ENCODE measurements at regions of chr7 and their contacts with region 1.

Region 1: DNA sequence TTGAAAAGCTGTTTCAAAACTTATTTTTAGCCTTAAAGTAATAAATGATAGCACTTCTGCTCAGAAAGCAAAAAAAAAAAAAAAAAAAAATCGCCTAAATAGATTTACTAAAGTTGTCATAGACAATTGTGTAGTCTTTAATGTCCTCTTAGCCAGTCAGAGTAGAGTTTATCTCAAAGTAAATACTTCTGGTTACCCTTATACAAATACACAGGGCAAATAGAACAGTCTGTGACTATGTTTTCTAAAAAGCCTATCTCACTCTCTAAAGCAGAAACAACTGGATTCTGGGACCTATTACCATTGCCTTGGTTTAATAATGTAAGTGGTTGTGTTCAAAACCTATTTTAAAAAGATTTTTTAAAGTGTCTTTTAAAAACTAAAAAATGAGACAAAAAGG is 156.2 kb upstream of the THSD7A start:
- DNase-seq: no peak
- ATAC-seq: no peak
- H3K4me3 ChIP-seq: no peak overlapping the region
- H3K27ac ChIP-seq: no peak overlapping the region
- H3K4me1 ChIP-seq: no peaks in the 10 kb centered on the region
- H3K27me3 ChIP-seq: no peaks in the 10 kb centered on the region
- CTCF ChIP-seq: no peak

Region 2: DNA sequence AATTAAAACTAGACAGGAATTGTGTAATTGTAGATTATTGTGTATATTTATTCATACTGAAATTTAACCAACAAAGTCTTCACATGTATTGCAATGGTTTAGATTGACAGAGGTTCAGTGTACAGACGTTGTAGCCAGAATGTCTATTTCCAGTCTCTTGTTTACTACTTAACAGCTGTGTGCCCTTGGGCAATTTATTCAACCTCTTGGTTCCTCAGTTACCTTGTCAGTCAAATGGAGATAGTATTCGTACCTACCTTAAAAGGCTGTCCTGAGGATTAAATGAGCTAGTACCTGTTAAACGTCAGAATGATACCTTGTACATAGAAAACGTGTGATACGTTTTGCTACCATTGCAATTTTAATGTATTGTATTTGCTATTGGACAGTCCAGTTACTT is 738.4 kb before region 1 on chr7:
- intact Hi-C with region 1: no loop called
- DNase-seq: no peak
- ATAC-seq: no peak
- H3K4me3 ChIP-seq: no peak overlapping the region
- H3K27ac ChIP-seq: no peak overlapping the region
- H3K4me1 ChIP-seq: no peaks in the 10 kb centered on the region
- H3K27me3 ChIP-seq: no peaks in the 10 kb centered on the region
- CTCF ChIP-seq: no peak

Region 3: GRCh38 chr7:12017046-12017445 is 28.9 kb after region 1 on chr7:
- intact Hi-C with region 1: loop called in 1 of 10 experiments (anchors 2 kb)
- DNase-seq: no peak
- ATAC-seq: no peak
- H3K4me3 ChIP-seq: no peak overlapping the region
- H3K27ac ChIP-seq: no peak overlapping the region
- H3K4me1 ChIP-seq: no peaks in the 10 kb centered on the region
- H3K27me3 ChIP-seq: no peaks in the 10 kb centered on the region
- CTCF ChIP-seq: no peak

Region 4: GRCh38 chr7:12031638-12032037 is 43.5 kb after region 1 on chr7:
- intact Hi-C with region 1: loop called in 1 of 10 experiments (anchors 10 kb)
- DNase-seq: no peak
- ATAC-seq: no peak
- H3K4me3 ChIP-seq: no peak overlapping the region
- H3K27ac ChIP-seq: no peak overlapping the region
- H3K4me1 ChIP-seq: no peaks in the 10 kb centered on the region
- H3K27me3 ChIP-seq: no peaks in the 10 kb centered on the region
- CTCF ChIP-seq: no peak

Measured in heart right ventricle (tissue), 16 donors.